CD8-positive, alpha-beta T cell (primary cell): ENCODE measurements at regions of chr12 and their contacts with region 1.

Region 1: GRCh38 chr12:96985480-96986362 is 78.7 kb downstream of the NEDD1 start:
- DNase-seq: peak; percentile 16 to 70 (median 34)
- ATAC-seq: peak; percentile 93
- H3K4me3 ChIP-seq: peak overlapping the region; percentile 42 to 51
- H3K4me3 Mint-ChIP-seq: peak overlapping the region; percentile 79
- H3K27ac ChIP-seq: no peak overlapping the region
- H3K27ac Mint-ChIP-seq: no peak overlapping the region
- H3K4me1 ChIP-seq: peaks cover 12% of the 10 kb centered on the region
- H3K4me1 Mint-ChIP-seq: peaks cover 5% of the 10 kb centered on the region
- H3K27me3 ChIP-seq: peaks cover 0 to 3% of the 10 kb centered on the region in 2 experiments
- H3K27me3 Mint-ChIP-seq: peaks cover 20% of the 10 kb centered on the region
- CTCF ChIP-seq: peak; percentile 85

Region 2: DNA sequence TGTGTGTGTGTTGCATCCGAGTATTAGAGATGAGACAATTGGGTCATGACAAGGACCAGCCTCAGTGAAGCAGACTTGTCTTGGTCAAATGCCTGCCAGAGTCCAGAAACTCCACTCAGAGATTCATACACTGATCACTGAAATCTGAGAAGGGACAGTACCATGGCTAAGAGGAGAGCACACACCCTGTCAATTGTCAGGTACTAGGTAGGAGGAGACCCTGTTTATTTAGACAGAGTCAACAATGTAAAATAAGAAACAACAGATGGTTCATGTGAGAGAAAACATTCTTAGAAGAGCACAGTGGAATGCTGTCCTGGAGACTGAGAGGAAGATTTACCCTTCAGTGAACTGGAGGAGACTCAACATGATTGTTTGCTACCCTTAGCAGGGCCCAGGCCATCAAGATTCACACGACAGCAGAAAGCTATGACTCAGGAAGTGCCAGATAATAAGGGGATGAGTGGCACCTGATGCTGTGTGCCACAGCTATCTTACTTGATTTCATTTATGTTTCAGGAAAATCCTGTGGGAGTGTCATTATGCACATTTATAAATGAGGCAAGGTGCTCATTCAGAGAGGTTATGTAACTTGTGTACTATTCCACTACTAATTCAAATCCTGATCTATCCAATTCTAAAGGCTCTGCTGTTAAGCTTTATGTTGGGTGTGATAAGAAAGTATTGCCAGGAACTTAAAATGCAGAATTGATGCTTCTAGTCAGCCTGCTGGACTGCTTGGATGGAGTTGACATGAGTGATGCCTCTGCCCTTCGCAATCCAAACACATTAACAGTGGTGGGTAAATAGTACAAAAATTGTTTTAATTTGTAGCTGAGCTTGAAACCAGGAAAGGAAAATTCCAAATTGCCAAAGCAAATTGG is 215.3 kb before region 1 on chr12:
- CTCF ChIA-PET with region 1: no interaction called
- POLR2A ChIA-PET with region 1: no interaction called
- intact Hi-C with region 1: loop called in 1 of 2 experiments (anchors 10 kb)
- DNase-seq: no peak
- ATAC-seq: no peak
- H3K4me3 ChIP-seq: no peak overlapping the region
- H3K4me3 Mint-ChIP-seq: no peak overlapping the region
- H3K27ac ChIP-seq: no peak overlapping the region
- H3K27ac Mint-ChIP-seq: no peak overlapping the region
- H3K4me1 ChIP-seq: no peaks in the 10 kb centered on the region
- H3K4me1 Mint-ChIP-seq: no peaks in the 10 kb centered on the region
- H3K27me3 ChIP-seq: no peaks in the 10 kb centered on the region
- H3K27me3 Mint-ChIP-seq: peaks cover 7% of the 10 kb centered on the region
- CTCF ChIP-seq: no peak

Region 3: GRCh38 chr12:97308576-97309198 is 323.0 kb after region 1 on chr12:
- CTCF ChIA-PET with region 1: interaction called, 3 read pairs
- POLR2A ChIA-PET with region 1: no interaction called
- intact Hi-C with region 1: loop called (anchors 2 to 10 kb)
- DNase-seq: peak in 3 of 9 experiments; percentile 16 to 71 (median 64)
- ATAC-seq: peak; percentile 56
- H3K4me3 ChIP-seq: no peak overlapping the region
- H3K4me3 Mint-ChIP-seq: no peak overlapping the region
- H3K27ac ChIP-seq: no peak overlapping the region
- H3K27ac Mint-ChIP-seq: no peak overlapping the region
- H3K4me1 ChIP-seq: no peaks in the 10 kb centered on the region
- H3K4me1 Mint-ChIP-seq: no peaks in the 10 kb centered on the region
- H3K27me3 ChIP-seq: no peaks in the 10 kb centered on the region
- H3K27me3 Mint-ChIP-seq: peaks cover 13% of the 10 kb centered on the region
- CTCF ChIP-seq: peak; percentile 91

Region 4: DNA sequence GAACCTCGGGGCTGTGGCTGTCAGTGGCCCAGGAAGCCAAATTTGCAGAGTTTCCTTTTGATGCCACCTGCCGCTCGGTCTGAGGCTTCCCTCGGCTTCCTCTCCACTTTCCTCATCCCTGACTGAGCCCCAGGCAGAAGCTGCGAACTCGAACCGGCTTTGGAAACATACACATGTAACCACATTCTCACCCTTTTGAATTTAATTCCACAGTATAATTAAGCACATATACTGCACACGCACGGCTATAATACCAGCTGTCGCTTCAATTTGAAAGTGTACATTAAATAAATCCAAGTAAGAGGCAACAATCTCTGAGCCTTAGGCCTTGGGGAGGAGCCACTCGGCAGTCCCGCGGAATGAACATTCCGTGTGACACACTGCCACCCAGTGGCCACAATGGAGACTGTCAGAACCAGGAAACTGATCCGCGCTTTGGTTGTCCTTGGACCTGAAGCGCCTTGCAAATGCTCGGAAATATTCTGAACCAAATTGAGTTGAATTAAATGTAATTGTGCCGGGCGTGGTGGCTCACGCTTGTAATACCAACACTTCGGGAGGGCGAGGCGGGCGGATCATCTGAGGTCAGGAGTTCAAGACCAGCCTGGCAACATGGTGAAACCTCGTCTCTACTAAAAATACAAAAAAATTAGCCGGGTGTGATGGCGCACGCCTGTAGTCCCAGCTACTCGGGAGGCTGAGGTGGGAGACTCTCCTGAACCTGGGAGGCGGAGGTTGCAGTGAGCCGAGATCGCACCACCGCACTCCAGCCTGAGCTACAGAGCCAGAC is 1411.8 kb after region 1 on chr12:
- CTCF ChIA-PET with region 1: interaction called, 3 read pairs
- POLR2A ChIA-PET with region 1: no interaction called
- intact Hi-C with region 1: loop called (anchors 1 to 2 kb)
- DNase-seq: peak; percentile 57 to 88 (median 79)
- ATAC-seq: peak; percentile 92
- H3K4me3 ChIP-seq: peak overlapping the region; percentile 33 to 47
- H3K4me3 Mint-ChIP-seq: peak overlapping the region; percentile 85
- H3K27ac ChIP-seq: peak overlapping the region in 1 of 2 experiments; percentile 44
- H3K27ac Mint-ChIP-seq: peak overlapping the region; percentile 49
- H3K4me1 ChIP-seq: peaks cover 12% of the 10 kb centered on the region
- H3K4me1 Mint-ChIP-seq: peaks cover 21% of the 10 kb centered on the region
- H3K27me3 ChIP-seq: no peaks in the 10 kb centered on the region
- H3K27me3 Mint-ChIP-seq: no peaks in the 10 kb centered on the region
- CTCF ChIP-seq: peak; percentile 94

Region 5: DNA sequence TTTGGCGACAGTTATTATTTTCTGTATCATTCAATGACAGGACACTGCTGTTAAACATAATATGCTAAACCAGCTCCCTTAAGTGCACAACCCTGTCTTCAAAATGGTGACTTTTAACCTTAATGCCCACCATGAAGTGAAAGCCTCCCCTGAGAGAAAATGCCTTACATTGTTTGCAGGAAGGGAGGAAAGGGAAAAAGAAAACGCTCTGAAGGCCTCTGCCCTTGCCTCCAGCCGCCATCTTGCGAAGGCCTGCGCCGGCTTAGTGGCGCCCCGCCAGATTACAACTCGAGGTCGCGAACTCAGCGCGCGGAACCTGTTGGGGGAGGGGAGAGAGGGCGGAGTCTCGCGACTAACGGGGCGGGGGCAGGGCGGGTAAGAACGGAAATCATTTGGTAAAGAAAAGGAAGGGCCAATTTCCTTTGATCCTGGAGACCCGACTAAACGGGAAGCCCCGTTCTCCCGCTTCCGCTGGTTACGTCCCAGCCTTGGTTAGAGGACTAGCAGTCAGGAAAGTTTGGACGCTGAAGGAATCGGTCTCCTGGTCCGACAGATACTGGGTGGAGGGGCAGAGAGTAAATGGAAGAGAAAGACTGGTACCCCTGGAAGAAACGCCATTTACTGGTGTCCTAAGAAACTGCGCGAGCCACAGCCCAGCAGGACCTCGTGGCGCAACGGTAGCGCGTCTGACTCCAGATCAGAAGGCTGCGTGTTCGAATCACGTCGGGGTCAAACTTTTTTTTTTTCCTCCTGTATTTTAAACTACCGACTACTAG is 1518.1 kb after region 1 on chr12:
- CTCF ChIA-PET with region 1: no interaction called
- POLR2A ChIA-PET with region 1: no interaction called
- intact Hi-C with region 1: loop called in 1 of 2 experiments (anchors 5 kb)
- DNase-seq: peak; percentile 89 to 97 (median 94)
- ATAC-seq: peak; percentile 89
- H3K4me3 ChIP-seq: peak overlapping the region; percentile 89 to 96
- H3K4me3 Mint-ChIP-seq: peak overlapping the region; percentile 99
- H3K27ac ChIP-seq: peak overlapping the region; percentile 91 to 99
- H3K27ac Mint-ChIP-seq: peak overlapping the region; percentile 99
- H3K4me1 ChIP-seq: peaks cover 3% of the 10 kb centered on the region
- H3K4me1 Mint-ChIP-seq: peaks cover 20% of the 10 kb centered on the region
- H3K27me3 ChIP-seq: no peaks in the 10 kb centered on the region
- H3K27me3 Mint-ChIP-seq: no peaks in the 10 kb centered on the region
- CTCF ChIP-seq: no peak